ENCODE measurements at regions of chr5 and their contacts with region 1.

Region 1: DNA sequence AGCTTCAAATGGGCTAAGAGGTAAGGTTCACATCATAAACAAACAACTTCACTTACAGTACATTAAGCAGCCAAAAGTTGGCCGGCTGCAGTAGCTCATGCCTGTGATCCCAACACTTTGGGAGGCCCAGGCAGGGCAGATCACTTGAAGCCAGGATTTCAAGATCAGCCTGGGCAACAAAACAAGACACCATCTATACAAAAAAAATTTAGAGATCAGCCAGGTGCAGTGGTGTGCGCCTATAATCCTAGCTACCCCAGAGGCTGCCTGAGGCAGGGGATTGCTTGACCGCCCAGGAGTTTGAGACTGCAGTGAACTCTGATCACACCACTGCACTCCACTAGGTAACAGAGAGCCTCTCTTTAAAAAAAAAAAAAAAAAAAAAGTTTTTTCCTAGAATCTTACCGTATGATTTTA is 16.9 kb downstream of the UBTD2 start:
- DNase-seq: no peak
- ATAC-seq: peak; percentile 23 to 57
- H3K4me3 ChIP-seq: no peak overlapping the region
- H3K27ac ChIP-seq: no peak overlapping the region
- H3K4me1 ChIP-seq: peaks cover 10% of the 10 kb centered on the region
- H3K27me3 ChIP-seq: no peaks in the 10 kb centered on the region

Region 2: DNA sequence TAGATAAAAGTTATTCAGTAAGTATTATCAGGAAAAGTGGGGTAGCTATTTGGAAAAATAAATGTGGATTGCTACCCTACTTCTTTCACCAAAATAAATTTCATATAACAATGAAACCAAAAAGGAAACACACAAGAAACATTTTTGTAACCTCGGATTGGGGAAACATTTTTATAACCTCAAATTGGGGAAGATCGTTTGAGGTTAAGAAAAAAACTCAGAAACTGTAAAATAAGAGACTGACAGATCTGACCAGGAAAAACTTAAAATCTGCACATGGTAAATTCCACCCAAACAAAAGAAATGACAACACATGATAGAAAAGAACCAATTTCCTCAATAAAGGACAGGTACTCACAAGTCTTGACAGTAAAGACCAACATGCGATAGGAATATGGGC is 59.2 kb before region 1 on chr5:
- intact Hi-C with region 1: loop called in 1 of 4 experiments (anchors 10 kb)
- DNase-seq: no peak
- ATAC-seq: no peak
- H3K4me3 ChIP-seq: no peak overlapping the region
- H3K27ac ChIP-seq: no peak overlapping the region
- H3K4me1 ChIP-seq: peaks cover 2% of the 10 kb centered on the region
- H3K27me3 ChIP-seq: no peaks in the 10 kb centered on the region